AG04450 (cell line): ENCODE measurements at regions of chr16 and their contacts with region 1.

Region 1: DNA sequence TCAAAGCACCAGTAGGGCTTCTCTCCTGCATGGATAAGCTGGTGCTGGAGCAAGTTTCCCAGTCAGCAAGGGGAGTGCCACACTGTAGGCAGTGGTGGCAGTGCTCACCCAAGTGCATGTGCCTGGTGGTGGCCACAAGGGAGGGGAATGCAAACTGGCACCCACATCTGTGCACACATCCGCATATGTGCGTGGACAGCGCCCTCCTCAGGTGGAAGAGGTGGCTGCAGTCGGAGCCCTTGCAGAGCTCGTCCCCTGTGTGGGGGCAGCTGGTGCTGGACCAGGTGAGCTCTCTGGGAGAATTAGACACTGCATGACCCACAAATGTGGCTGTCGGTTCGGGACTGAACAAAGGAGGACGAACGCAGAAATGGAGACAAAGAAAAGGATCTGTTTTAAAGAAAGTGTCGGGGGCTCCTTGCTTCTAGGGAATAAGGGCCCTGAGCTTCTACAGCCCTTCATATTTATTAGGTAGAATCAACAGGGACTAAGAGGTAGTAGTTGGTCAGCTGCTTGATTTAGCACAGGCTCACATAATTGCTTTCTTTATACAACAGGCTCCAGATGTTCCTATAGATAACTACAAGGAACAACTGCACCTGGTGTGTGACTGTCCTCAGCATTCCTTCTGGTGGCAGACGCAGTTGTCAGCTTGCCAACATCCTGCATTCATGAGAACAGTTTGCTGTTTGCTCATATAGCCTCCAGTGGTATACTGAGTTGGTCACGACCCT is 5.3 kb upstream of the ZNF689 start:
- DNase-seq: no peak
- H3K4me3 ChIP-seq: no peak overlapping the region
- H3K27ac ChIP-seq: no peak overlapping the region
- H3K27me3 ChIP-seq: peaks cover 6% of the 10 kb centered on the region
- CTCF ChIP-seq: peak; percentile 43

Region 2: GRCh38 chr16:30628627-30629540 is 13.4 kb after region 1 on chr16:
- CTCF ChIA-PET with region 1: interaction called, 13 read pairs
- POLR2A ChIA-PET with region 1: no interaction called
- DNase-seq: peak; percentile 43
- H3K4me3 ChIP-seq: no peak overlapping the region
- H3K27ac ChIP-seq: no peak overlapping the region
- H3K27me3 ChIP-seq: peaks cover 5% of the 10 kb centered on the region
- CTCF ChIP-seq: peak; percentile 94

Region 3: DNA sequence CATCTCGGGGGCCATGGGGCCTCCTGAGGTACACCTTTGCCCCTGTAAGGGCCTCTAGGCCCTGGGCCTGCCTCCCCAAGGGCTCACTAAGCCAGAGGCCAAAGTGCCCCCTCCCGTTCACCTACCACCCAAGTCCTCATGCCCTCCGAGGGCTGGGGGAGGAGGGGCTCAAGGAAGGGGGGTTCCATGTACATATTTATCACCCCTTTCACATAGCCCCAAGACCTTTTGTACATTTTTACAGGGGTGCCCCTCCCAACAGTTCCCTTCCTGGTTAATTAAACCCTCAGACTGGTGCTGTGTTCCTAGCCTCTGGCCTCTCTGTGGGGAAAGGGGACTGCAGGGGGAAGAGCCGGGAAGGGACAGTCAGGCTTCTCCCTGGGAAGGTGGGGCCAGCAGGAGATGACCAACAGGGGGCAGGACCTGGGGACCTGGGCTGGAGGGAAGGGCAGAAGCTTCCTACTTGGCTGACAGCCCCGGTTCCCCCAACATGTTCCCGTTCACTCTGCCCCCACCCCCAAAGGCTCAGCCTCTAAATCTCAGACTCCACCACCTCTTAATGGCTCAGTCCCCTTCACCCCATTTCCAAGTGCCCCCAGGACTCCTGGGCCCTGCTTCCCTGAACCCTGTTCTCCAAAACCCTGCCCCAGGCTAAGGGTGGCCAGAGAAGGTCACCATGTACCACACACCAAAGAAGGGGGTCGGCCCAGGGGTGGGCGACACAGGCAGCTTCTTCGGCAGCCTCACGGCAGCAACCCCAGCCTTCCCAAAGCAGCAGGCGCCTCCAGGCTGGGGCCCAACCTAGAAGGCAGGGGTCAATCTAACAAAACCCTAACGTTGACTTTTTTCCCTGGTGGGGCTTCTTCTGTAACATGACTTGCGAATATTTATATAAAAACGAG is 54.6 kb after region 1 on chr16:
- CTCF ChIA-PET with region 1: interaction called, 11 read pairs
- POLR2A ChIA-PET with region 1: no interaction called
- DNase-seq: no peak
- H3K4me3 ChIP-seq: no peak overlapping the region
- H3K27ac ChIP-seq: no peak overlapping the region
- H3K27me3 ChIP-seq: no peaks in the 10 kb centered on the region
- CTCF ChIP-seq: no peak